Body of pancreas (tissue), 4 donors: ENCODE measurements at regions of chr1 and their contacts with region 1.

Region 1: GRCh38 chr1:109186733-109187086 is 27.0 kb upstream of the SARS1 start:
- DNase-seq: no peak
- ATAC-seq: no peak
- H3K4me3 ChIP-seq: no peak overlapping the region
- H3K27ac ChIP-seq: peak overlapping the region; percentile 16 to 59 (median 22)
- H3K4me1 ChIP-seq: peaks cover 64% of the 10 kb centered on the region
- H3K27me3 ChIP-seq: no peaks in the 10 kb centered on the region
- CTCF ChIP-seq: no peak
- POLR2A ChIP-seq: no peak

Region 2: GRCh38 chr1:109142260-109142659 is 44.5 kb before region 1 on chr1:
- intact Hi-C with region 1: loop called (anchors 5 kb)
- DNase-seq: no peak
- ATAC-seq: no peak
- H3K4me3 ChIP-seq: no peak overlapping the region
- H3K27ac ChIP-seq: no peak overlapping the region
- H3K4me1 ChIP-seq: peaks cover 42% of the 10 kb centered on the region
- H3K27me3 ChIP-seq: no peaks in the 10 kb centered on the region
- CTCF ChIP-seq: no peak
- POLR2A ChIP-seq: no peak